ENCODE measurements at regions of chr10 and their contacts with region 1.

Region 1: DNA sequence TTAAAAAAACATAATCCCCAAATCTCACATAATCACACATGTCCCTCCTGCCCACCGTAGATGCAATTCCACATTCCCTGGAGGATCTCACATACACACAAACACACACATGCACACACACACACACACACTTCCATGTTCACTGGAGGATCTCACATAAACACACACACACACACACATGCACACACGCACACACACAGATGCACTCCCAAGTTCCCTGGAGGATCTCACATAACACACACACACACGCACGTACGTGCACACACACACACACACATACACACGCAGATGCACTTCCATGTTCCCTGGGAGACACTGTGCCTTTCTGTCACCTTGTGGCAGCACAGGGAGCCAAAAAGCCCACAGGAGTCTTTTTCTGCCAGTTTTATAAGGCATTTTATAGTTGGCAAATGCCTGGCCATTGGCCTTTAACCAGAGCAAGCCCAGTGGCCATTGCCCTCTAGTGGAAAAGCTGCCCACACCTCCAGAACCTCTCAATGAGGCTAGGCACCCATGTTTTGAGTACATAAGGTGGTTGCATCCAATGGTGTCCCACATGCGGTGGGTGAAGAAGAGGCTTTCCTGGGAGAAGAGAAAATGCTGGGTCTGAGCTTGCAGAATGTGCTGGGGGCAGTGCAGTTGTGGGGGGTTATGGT is 115.4 kb upstream of the ACBD5 start:
- DNase-seq: no peak
- CTCF ChIP-seq: peak; percentile 22

Region 2: DNA sequence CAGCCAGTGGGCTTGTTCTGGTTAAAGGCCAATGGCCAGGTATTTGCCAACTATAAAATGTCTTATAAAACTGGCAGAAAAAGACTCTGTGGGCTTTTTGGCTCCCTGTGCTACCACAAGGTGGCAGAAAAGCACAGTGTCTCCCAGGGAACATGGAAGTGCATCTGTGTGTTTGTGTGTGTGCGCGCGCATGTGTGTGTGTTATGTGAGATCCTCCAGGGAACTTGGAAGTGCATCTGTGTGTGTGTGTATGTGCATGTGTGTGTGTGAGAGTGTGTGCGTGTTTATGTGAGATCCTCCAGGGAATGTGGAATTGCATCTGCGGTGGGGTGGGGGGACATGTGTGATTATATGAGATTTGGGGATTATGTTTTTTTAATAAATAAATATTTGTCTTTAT is 465.1 kb before region 1 on chr10:
- in situ Hi-C with region 1: loop called (anchors 5 kb)
- DNase-seq: peak; percentile 36
- CTCF ChIP-seq: no peak

Region 3: GRCh38 chr10:27241652-27242472 is 114.2 kb before region 1 on chr10:
- in situ Hi-C with region 1: loop called (anchors 10 kb)
- DNase-seq: peak; percentile 88
- CTCF ChIP-seq: peak; percentile 23

Measured in GM13976 (cell line).